Astrocyte of the cerebellum (primary cell): ENCODE measurements at regions of chr2 and their contacts with region 1.

Region 1: GRCh38 chr2:68715353-68716041 is 19.1 kb upstream of the ARHGAP25 start:
- DNase-seq: peak; percentile 26
- H3K4me3 ChIP-seq: no peak overlapping the region
- CTCF ChIP-seq: peak; percentile 82

Region 2: DNA sequence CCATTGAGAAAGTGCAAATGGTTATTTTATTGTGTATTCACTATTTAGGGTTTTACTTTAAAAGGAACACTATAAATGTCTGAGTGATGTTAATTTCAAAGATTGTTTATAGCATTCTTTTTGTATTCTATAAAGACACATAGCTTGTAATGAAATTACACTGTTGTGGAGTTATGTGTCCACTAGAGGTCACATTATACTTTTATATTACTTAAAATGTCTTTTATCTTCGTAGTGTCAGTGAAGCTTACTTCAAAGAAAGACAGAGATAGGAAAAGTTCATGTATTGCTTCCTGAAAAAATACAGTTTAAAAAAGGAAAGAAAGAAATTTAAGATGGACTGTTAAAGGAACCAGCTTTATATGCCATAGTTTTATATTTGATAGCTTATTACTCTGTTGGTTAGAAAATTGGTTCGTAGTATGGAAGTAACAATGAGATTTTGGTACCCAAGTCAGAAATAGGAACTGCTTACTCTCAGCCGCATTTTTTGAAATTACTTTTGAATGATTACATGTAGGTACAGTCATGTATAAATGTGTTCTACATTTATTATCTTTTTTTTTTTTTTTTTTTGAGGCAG is 227.6 kb before region 1 on chr2:
- in situ Hi-C with region 1: loop called (anchors 25 kb)
- DNase-seq: no peak
- H3K4me3 ChIP-seq: no peak overlapping the region
- CTCF ChIP-seq: peak; percentile 3

Region 3: DNA sequence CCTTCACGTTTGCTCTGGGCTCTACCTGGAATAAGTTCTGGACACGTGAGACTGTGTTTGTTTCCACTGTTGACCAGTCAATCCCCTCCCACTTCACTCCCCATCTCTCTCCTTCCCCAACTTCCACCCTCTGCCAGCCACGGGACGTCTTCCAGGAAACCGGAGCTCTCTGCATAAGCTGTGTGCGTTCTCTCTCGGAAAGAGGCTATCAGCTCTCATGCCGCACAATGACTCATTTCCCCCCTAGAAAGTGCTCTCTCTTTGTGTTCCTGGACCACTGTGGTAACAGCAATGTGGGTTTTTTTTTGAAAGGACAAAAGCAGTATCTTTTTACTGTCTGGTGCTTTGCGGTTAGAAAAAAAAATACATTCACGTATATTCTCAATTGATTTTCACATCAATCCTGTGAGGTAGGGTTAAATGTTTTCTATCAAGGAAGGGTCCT is 61.9 kb before region 1 on chr2:
- in situ Hi-C with region 1: no loop called
- DNase-seq: peak; percentile 91
- H3K4me3 ChIP-seq: no peak overlapping the region
- CTCF ChIP-seq: no peak

Region 4: GRCh38 chr2:68663371-68664156 is 51.9 kb before region 1 on chr2:
- in situ Hi-C with region 1: no loop called
- DNase-seq: no peak
- H3K4me3 ChIP-seq: no peak overlapping the region
- CTCF ChIP-seq: no peak

Region 5: GRCh38 chr2:69007169-69007568 is 291.7 kb after region 1 on chr2:
- in situ Hi-C with region 1: no loop called
- DNase-seq: no peak
- H3K4me3 ChIP-seq: no peak overlapping the region
- CTCF ChIP-seq: no peak